Mucosa of descending colon (tissue), 3 donors: ENCODE measurements at regions of chr9 and their contacts with region 1.

Region 1: GRCh38 chr9:111298731-111299598 is 31.1 kb downstream of the OR2K2 start:
- DNase-seq: peak in 2 of 3 donors; percentile 34 to 53
- ATAC-seq: peak; percentile 82
- H3K4me3 ChIP-seq: no peak overlapping the region
- H3K4me1 ChIP-seq: no peaks in the 10 kb centered on the region
- CTCF ChIP-seq: no peak

Region 2: GRCh38 chr9:110316261-110317075 is 982.5 kb before region 1 on chr9:
- intact Hi-C with region 1: no loop called
- DNase-seq: no peak
- ATAC-seq: peak; percentile 30
- H3K4me3 ChIP-seq: no peak overlapping the region
- H3K4me1 ChIP-seq: no peaks in the 10 kb centered on the region
- CTCF ChIP-seq: no peak

Region 3: GRCh38 chr9:110638381-110638954 is 660.5 kb before region 1 on chr9:
- intact Hi-C with region 1: loop called (anchors 5 kb)
- DNase-seq: no peak
- ATAC-seq: no peak
- H3K4me3 ChIP-seq: no peak overlapping the region
- H3K4me1 ChIP-seq: no peaks in the 10 kb centered on the region
- CTCF ChIP-seq: no peak